Endothelial cell of umbilical vein (primary cell): ENCODE measurements at regions of chr5 and their contacts with region 1.

Region 1: DNA sequence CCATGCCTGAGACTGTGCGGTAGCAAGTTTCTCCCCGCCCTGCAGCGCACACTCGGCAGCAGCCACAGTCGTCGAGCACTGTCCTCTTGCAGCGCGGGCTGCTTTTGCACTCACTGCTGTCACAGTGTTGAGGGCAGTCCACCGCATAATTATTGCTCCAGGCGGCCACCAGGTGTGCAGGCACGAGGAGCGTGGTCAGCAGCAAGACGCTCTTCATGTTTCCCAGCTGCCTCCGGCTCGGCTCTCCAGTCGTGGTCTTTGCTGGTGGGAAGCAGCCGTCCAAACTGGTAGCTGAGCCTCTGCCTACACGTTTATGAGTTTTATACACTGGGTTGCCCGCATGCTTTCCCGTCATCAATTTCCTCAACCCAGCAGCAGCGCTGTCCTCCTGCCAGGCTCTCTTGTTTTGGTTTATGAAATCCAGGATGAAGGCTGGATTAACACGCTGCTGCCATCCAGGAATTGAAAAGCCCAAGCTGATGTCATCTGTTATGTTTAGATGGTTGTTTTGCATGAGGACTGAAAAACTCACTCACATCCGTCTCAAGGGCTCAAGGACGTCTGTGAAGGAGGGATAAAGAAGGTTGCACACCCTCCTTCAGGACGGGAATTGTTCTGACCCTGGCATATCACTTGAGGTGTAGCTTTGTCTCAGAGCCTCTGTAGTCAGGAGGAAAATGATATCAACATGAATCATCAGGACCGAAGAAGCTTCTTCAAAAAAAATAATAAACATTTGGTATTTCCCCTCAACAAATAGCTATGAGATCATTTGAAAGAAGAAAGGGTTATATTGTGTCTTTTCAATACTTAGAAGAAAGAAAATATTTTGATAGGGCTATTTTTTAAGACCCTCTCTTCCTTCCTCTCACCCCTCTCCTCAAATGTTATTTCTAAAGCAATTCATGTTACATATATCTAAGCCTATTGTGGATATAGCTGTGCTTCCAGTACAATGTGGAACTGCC is at the start of gene ESM1:
- DNase-seq: peak; percentile 99
- H3K4me3 ChIP-seq: peak within 1 kb of the TSS; percentile 69 to 99 (median 97)
- H3K27ac ChIP-seq: peak within 1 kb of the TSS; percentile 99
- H3K4me1 ChIP-seq: peaks cover 45% of the 10 kb centered on the region
- H3K27me3 ChIP-seq: no peaks in the 10 kb centered on the region
- CTCF ChIP-seq: peak; percentile 28 to 34
- POLR2A ChIP-seq: peak; percentile 92
- total RNA-seq, gene ESM1: 577 and 781 TPM in 2 replicates

Region 2: GRCh38 chr5:54799645-54800044 is 185.9 kb before region 1 on chr5:
- CTCF ChIA-PET with region 1: no interaction called
- POLR2A ChIA-PET with region 1: no interaction called
- dilution Hi-C with region 1: no loop called
- intact Hi-C with region 1: no loop called
- DNase-seq: no peak
- H3K4me3 ChIP-seq: no peak overlapping the region
- H3K27ac ChIP-seq: no peak overlapping the region
- H3K4me1 ChIP-seq: no peaks in the 10 kb centered on the region
- H3K27me3 ChIP-seq: no peaks in the 10 kb centered on the region
- CTCF ChIP-seq: no peak
- POLR2A ChIP-seq: no peak

Region 3: DNA sequence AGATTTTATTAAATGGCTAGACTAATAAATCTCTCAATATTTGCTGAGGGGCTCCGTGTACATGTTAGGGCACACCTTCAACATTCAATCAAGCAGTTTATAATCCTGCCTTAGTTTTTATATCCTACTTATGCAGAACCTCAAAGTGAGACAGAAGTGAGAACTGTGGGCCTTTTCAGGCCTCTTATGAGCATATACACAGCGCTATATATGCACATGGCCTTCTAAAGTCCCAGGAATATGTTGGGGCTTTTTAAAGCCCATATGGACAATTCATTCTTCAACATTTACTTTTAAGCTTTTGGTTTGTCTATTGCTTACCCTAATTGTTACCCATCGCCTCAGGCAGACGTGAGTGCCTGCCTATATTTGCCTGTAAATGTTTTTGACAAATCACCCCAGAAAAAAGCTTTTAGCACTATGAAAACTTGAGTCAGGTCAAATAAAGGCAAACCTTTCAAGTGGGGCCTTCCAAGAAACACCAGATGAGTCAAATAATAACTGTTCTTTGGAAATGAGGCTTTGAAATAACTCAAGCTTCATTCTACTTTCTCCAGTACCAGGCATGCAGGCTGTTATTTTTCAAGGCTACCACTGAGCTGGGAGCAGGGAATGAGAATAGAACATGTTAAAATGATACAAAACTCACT is 58.4 kb before region 1 on chr5:
- CTCF ChIA-PET with region 1: no interaction called
- POLR2A ChIA-PET with region 1: no interaction called
- dilution Hi-C with region 1: no loop called
- intact Hi-C with region 1: no loop called
- DNase-seq: no peak
- H3K4me3 ChIP-seq: no peak overlapping the region
- H3K27ac ChIP-seq: no peak overlapping the region
- H3K4me1 ChIP-seq: no peaks in the 10 kb centered on the region
- H3K27me3 ChIP-seq: peaks cover 11 to 14% of the 10 kb centered on the region in 2 experiments
- CTCF ChIP-seq: no peak
- POLR2A ChIP-seq: no peak

Region 4: DNA sequence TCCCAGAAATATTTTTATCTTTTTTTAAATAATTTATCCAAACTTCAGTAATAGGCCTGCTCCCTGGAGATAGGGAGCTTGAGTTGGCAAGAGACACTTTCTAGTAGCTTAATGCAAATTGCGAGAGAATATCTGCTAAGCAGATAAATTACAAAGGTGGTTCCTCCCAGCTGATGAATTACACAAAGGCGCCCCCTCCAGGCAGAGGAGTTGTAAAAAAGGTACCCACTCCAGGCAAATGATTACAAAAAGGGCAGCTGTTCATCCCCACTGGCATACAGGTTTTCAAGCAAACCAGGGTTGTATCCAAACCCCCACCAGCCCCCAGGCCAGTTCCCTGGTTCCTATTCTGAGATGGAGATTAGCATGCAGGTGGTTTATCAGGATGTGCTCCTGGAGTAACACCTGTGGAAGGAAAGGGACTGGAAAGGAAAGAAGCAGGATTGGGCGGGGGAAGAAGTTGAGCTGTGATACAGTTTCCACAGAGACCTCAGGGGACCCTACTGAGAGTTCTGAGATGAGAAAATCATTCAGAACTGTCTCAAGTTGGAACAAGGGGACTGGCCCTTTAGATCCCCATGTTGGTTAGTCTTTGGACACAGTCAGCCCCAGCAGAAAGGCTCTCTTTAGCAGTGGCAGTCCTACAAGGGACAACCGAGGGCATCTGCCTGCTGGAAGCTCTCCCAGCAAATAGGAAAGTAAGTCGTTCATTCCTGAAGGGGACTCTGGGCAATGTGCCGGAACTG is 25.7 kb before region 1 on chr5:
- CTCF ChIA-PET with region 1: interaction called, 14 read pairs
- POLR2A ChIA-PET with region 1: no interaction called
- dilution Hi-C with region 1: no loop called
- intact Hi-C with region 1: no loop called
- DNase-seq: peak; percentile 57
- H3K4me3 ChIP-seq: no peak overlapping the region
- H3K27ac ChIP-seq: no peak overlapping the region
- H3K4me1 ChIP-seq: peaks cover 2% of the 10 kb centered on the region
- H3K27me3 ChIP-seq: no peaks in the 10 kb centered on the region
- CTCF ChIP-seq: peak; percentile 50
- POLR2A ChIP-seq: no peak

Region 5: DNA sequence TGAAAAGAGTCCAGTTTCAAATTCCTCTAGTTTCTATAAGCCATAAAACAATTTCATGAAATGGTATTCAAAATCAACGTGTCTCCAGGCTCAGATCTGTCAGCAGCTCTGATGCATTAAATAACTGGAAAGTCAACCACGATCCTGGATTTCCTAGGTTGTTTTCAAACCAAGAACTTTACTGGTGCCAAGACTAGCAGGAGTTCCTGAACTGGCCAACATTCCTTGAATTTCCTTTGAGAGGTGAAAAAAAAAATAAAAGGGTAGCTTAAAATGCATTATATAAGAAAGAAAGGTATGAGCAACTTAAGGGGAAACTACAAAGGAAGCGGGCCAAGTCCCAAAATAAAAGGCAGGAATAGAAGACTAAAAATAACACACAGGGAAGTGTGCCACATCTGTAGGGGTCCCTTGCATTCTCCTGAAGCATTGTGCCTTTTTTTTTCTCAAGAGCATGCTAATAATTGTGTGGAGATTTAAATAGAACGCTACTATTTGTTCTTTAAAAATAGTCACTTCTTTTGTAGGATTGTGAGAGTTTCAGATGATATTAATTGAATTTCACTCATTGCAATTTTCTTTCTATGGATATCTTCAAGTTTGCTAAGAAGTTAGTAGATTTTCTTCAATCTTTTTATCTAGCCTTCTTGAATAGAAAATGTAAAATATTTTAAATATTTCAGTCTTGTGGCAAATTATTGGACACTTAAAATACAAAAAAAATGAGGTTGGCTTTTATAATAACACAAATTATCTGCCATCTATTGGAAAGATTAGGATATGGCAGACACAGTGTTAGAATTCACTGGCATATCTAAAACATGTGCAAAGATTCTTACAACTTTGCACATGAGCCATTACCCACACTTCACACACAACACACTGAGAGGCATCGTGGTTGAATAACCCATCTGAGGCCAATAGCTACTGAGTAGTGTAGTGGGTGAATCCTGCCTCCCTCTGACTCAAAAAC is 15.4 kb before region 1 on chr5:
- CTCF ChIA-PET with region 1: interaction called, 20 read pairs
- POLR2A ChIA-PET with region 1: no interaction called
- dilution Hi-C with region 1: no loop called
- intact Hi-C with region 1: no loop called
- DNase-seq: peak; percentile 88
- H3K4me3 ChIP-seq: no peak overlapping the region
- H3K27ac ChIP-seq: no peak overlapping the region
- H3K4me1 ChIP-seq: peaks cover 27% of the 10 kb centered on the region
- H3K27me3 ChIP-seq: no peaks in the 10 kb centered on the region
- CTCF ChIP-seq: no peak
- POLR2A ChIP-seq: no peak

Region 6: GRCh38 chr5:55003432-55004065 is 18.0 kb after region 1 on chr5:
- CTCF ChIA-PET with region 1: interaction called, 6 read pairs
- POLR2A ChIA-PET with region 1: interaction called, 5 read pairs
- dilution Hi-C with region 1: no loop called
- intact Hi-C with region 1: loop called (anchors 1 kb)
- DNase-seq: peak; percentile 57
- H3K4me3 ChIP-seq: no peak overlapping the region
- H3K27ac ChIP-seq: peak overlapping the region; percentile 89
- H3K4me1 ChIP-seq: peaks cover 43% of the 10 kb centered on the region
- H3K27me3 ChIP-seq: no peaks in the 10 kb centered on the region
- CTCF ChIP-seq: no peak
- POLR2A ChIP-seq: no peak

Region 7: GRCh38 chr5:55063220-55063863 is 77.8 kb after region 1 on chr5:
- CTCF ChIA-PET with region 1: no interaction called
- POLR2A ChIA-PET with region 1: no interaction called
- dilution Hi-C with region 1: no loop called
- intact Hi-C with region 1: loop called (anchors 1 kb)
- DNase-seq: peak; percentile 54
- H3K4me3 ChIP-seq: no peak overlapping the region
- H3K27ac ChIP-seq: peak overlapping the region; percentile 24
- H3K4me1 ChIP-seq: peaks cover 15% of the 10 kb centered on the region
- H3K27me3 ChIP-seq: no peaks in the 10 kb centered on the region
- CTCF ChIP-seq: no peak
- POLR2A ChIP-seq: no peak

Region 8: DNA sequence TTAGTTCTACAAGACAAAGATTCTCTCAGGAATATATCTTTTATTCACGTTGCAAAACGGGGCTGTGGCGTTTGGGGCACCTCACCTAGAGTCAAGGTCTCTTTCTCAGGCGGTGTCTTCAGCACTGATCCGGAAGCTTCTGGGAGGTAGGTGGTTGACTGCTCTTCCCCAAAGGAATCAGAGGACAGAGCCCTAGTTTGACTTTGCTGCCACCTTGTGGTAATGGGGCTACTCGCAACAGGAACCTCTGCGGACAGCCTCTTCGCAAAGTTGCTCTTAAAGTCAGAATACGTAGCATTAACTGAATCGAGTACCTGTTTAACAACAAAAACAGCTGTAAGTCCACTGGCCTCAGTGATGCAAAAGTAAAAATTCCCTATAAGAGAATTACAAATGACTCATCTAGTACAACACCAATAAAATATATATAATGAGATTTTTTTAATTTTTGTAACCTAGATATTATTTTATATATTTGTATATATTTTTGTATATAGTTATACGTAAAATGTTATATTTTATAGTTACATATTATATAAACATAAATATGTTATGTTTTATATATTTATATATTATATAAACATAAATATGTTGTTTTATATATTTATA is 161.1 kb after region 1 on chr5:
- CTCF ChIA-PET with region 1: interaction called, 14 read pairs
- POLR2A ChIA-PET with region 1: interaction called, 4 read pairs
- dilution Hi-C with region 1: loop called (anchors 25 kb)
- intact Hi-C with region 1: loop called (anchors 1 kb)
- DNase-seq: peak; percentile 92
- H3K4me3 ChIP-seq: no peak overlapping the region
- H3K27ac ChIP-seq: no peak overlapping the region
- H3K4me1 ChIP-seq: peaks cover 5% of the 10 kb centered on the region
- H3K27me3 ChIP-seq: no peaks in the 10 kb centered on the region
- CTCF ChIP-seq: peak; percentile 90 to 94
- POLR2A ChIP-seq: no peak

Region 9: DNA sequence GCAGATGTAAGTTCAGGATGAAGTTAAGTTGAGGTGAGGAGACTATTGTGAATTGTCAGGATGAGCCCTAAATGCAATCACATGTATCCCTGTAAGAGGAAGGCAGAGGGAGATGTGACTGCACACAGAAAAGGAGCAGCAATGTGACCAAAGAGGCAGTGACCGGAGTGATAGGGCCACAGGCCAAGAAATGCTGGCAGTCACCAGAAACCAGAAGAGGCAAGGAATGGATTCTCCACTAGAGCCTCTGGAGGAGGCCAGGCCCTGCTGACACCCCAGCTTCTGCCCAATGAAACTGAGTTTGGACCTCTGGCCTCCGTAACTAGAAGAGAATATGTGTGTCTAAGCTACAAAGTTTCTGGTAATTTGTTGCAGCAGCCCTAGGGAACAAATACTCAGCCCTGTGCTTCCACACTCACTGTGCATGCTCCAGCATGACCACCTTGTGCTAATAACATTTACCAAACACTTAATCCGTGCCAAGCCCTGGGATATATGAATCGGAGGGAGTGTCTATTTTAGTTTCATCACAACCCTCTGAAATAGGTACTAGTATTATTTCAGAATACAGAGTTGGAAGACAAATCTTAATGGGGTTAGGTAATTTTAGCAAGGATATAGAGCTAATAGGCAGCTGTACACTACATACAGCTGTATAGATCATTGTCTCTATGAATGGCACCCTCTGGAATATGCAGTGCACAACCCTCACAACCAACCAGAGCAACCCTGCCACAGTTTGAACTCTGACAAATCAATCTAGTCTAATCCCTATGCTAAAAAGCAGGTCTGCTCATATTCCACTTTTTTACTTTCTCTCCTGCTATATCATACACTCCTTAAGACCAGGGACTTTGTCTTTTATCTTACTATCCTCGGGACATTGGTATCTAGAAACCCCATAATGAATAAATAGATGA is 166.6 kb after region 1 on chr5:
- CTCF ChIA-PET with region 1: interaction called, 4 read pairs
- POLR2A ChIA-PET with region 1: no interaction called
- dilution Hi-C with region 1: loop called (anchors 25 kb)
- intact Hi-C with region 1: loop called (anchors 1 kb)
- DNase-seq: peak; percentile 40
- H3K4me3 ChIP-seq: no peak overlapping the region
- H3K27ac ChIP-seq: peak overlapping the region; percentile 35
- H3K4me1 ChIP-seq: peaks cover 40% of the 10 kb centered on the region
- H3K27me3 ChIP-seq: no peaks in the 10 kb centered on the region
- CTCF ChIP-seq: no peak
- POLR2A ChIP-seq: no peak

Region 10: GRCh38 chr5:55665065-55665464 is 679.5 kb after region 1 on chr5:
- CTCF ChIA-PET with region 1: no interaction called
- POLR2A ChIA-PET with region 1: no interaction called
- dilution Hi-C with region 1: no loop called
- intact Hi-C with region 1: no loop called
- DNase-seq: no peak
- H3K4me3 ChIP-seq: no peak overlapping the region
- H3K27ac ChIP-seq: no peak overlapping the region
- H3K4me1 ChIP-seq: no peaks in the 10 kb centered on the region
- H3K27me3 ChIP-seq: no peaks in the 10 kb centered on the region
- CTCF ChIP-seq: no peak
- POLR2A ChIP-seq: no peak

Region 11: DNA sequence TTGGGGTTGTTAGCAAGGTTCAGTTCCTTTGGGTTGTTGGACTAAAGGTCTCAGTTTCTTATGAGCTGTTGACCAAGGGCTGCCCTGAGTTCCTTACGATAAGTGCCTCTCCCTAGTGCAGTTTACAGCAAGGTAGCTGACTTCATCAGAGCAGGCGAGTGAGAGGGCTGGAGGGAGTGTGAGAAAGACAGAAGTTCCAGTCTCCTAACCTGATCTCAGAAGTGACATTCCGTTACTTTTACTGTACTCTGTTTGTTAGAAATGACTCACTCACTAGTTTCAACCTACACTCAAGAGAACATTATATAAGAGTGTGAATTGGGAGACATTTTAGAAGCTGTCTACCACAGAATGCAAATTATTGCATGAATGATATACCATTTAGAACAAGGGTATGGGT is 844.4 kb after region 1 on chr5:
- CTCF ChIA-PET with region 1: no interaction called
- POLR2A ChIA-PET with region 1: no interaction called
- dilution Hi-C with region 1: no loop called
- intact Hi-C with region 1: no loop called
- DNase-seq: no peak
- H3K4me3 ChIP-seq: no peak overlapping the region
- H3K27ac ChIP-seq: no peak overlapping the region
- H3K4me1 ChIP-seq: no peaks in the 10 kb centered on the region
- H3K27me3 ChIP-seq: no peaks in the 10 kb centered on the region
- CTCF ChIP-seq: no peak
- POLR2A ChIP-seq: no peak